ENCODE measurements at regions of chr10 and their contacts with region 1.

Region 1: DNA sequence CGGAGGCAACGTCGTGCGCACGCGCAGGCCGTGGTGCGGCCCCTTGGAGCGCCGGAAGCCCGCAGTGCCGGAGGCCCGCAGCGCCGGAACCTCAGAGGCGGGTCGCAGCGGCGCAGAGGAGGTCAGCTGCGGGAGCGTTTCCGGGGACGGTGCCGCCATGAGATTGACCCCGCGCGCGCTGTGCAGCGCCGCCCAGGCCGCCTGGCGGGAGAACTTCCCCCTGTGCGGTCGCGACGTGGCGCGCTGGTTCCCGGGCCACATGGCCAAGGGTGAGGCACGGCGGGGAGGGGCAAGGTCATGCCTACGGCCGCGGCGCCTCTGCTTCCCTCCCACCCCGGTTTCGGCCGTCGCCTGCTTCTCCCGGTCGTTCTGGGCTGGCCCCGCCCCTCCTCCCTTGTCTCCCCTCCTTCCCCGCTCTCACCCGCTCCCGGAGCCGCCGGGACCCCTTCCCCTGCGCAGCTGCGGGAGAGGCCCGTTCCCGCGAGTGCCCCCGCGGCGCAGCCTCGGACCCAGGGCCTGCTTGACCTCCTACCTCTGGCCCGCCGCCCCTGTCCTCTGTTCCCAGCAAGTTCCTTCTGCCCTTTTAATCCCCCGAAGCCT is at the start of gene MTG1:
- DNase-seq: peak; percentile 96
- H3K4me3 Mint-ChIP-seq: peak within 1 kb of the TSS; percentile 96
- H3K27ac Mint-ChIP-seq: peak within 1 kb of the TSS; percentile 95
- H3K4me1 Mint-ChIP-seq: peaks cover 49% of the 10 kb centered on the region
- H3K27me3 Mint-ChIP-seq: no peaks in the 10 kb centered on the region
- total RNA-seq, gene MTG1: 33.9 to 40.3 TPM

Region 2: DNA sequence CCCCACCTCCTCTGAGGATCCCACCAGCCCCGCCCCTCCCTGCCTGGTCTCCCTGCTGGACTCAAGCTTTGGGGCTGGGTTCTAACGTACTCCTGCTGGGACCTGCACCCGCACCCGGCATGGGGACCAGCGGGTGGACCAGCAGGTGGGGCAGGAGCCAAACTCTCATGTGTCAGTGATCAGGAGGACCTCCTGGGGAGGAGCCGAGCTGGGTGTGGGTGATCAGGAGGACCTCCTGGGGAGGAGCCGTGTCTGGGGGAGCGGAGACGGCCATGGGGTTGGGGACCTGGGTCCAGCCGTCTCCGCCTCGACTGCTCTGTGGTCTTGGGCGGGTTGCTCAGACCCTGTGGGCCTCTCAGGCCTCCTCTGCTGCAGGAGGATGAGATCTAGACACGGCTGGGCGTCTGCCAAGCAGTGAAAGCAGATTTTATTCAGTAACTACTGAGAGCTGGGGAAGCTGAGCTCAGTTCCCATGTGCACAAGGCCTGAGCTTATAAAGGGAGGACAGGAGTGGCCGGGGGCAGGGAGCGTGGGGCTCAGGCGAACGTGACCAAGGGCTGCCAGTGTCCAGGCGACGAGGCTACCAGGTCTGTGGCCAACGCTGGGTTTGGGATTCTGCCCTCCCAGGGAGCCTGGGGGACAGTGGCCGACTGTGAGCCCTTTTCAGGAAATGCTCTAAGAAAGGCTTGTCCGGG is 197.8 kb before region 1 on chr10:
- CTCF ChIA-PET with region 1: no interaction called
- POLR2A ChIA-PET with region 1: no interaction called
- intact Hi-C with region 1: no loop called
- DNase-seq: no peak
- H3K4me3 Mint-ChIP-seq: no peak overlapping the region
- H3K27ac Mint-ChIP-seq: no peak overlapping the region
- H3K4me1 Mint-ChIP-seq: no peaks in the 10 kb centered on the region
- H3K27me3 Mint-ChIP-seq: no peaks in the 10 kb centered on the region

Region 3: GRCh38 chr10:133278577-133279265 is 115.4 kb before region 1 on chr10:
- CTCF ChIA-PET with region 1: interaction called, 3 read pairs
- POLR2A ChIA-PET with region 1: no interaction called
- intact Hi-C with region 1: loop called (anchors 1 kb)
- DNase-seq: peak; percentile 83
- H3K4me3 Mint-ChIP-seq: peak overlapping the region; percentile 63
- H3K27ac Mint-ChIP-seq: peak overlapping the region; percentile 85
- H3K4me1 Mint-ChIP-seq: peaks cover 28% of the 10 kb centered on the region
- H3K27me3 Mint-ChIP-seq: no peaks in the 10 kb centered on the region

Region 4: GRCh38 chr10:133357285-133358151 is 36.6 kb before region 1 on chr10 and contains the start of gene FUOM:
- CTCF ChIA-PET with region 1: no interaction called
- POLR2A ChIA-PET with region 1: interaction called, 5 read pairs
- intact Hi-C with region 1: loop called (anchors 5 kb)
- DNase-seq: peak; percentile 82
- H3K4me3 Mint-ChIP-seq: peak within 1 kb of the TSS; percentile 78
- H3K27ac Mint-ChIP-seq: peak within 1 kb of the TSS; percentile 69
- H3K4me1 Mint-ChIP-seq: peaks cover 3% of the 10 kb centered on the region
- H3K27me3 Mint-ChIP-seq: no peaks in the 10 kb centered on the region
- total RNA-seq, gene FUOM: 46.5 to 49.8 TPM

Region 5: GRCh38 chr10:133373104-133373624 is 21.0 kb before region 1 on chr10 and contains the start of gene ECHS1:
- CTCF ChIA-PET with region 1: interaction called, 3 read pairs
- POLR2A ChIA-PET with region 1: interaction called, 10 read pairs
- intact Hi-C with region 1: loop called (anchors 1 kb)
- DNase-seq: peak; percentile 96
- H3K4me3 Mint-ChIP-seq: peak within 1 kb of the TSS; percentile 81
- H3K27ac Mint-ChIP-seq: peak within 1 kb of the TSS; percentile 33
- H3K4me1 Mint-ChIP-seq: peaks cover 6% of the 10 kb centered on the region
- H3K27me3 Mint-ChIP-seq: no peaks in the 10 kb centered on the region
- total RNA-seq, gene ECHS1: 60.2 to 64.8 TPM

Region 6: DNA sequence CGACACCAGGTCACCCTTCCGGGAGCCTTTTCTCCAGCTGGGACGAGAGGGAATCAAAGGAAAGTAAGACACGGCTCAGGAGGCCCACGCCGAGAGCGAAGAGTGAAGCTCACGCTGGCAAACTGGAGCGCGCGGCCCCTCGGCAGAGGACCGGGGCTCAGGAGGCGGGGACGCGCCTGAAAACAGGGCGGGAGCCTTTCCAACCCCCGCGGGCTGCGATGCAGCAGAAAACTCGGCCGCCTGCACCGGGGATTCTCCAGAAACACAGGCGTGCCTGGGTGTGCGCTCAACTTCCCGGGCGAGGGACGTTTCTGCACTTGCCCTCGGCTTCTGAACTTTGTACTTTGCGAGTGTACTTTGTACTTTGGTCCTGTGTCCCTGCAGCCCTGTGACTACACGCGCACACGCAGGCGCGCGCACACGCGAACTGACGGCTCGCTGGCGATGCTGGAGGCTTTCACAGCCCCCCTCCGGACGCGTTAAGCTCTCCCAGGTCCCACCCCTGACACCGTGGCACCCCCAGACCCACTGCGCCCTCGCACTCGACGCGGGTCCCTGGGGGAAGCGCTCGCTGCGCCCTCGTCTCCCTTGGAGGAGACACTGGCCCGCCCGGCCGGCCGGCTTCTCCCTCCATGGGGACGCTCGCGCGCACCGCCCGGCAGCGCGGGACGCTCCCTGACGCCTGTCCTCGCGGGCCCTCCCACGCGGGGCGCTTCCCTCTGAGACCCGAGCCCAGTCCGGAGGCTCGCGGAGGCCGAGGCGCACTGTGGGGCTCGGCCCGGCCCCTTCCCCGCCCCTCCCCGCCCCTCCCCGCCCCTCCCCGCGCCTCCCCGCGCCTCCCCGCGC is 15.7 kb before region 1 on chr10:
- CTCF ChIA-PET with region 1: interaction called, 3 read pairs
- POLR2A ChIA-PET with region 1: interaction called, 10 read pairs
- intact Hi-C with region 1: loop called (anchors 1 kb)
- DNase-seq: peak; percentile 71
- H3K4me3 Mint-ChIP-seq: peak overlapping the region; percentile 73
- H3K27ac Mint-ChIP-seq: no peak overlapping the region
- H3K4me1 Mint-ChIP-seq: peaks cover 2% of the 10 kb centered on the region
- H3K27me3 Mint-ChIP-seq: no peaks in the 10 kb centered on the region

Region 7: DNA sequence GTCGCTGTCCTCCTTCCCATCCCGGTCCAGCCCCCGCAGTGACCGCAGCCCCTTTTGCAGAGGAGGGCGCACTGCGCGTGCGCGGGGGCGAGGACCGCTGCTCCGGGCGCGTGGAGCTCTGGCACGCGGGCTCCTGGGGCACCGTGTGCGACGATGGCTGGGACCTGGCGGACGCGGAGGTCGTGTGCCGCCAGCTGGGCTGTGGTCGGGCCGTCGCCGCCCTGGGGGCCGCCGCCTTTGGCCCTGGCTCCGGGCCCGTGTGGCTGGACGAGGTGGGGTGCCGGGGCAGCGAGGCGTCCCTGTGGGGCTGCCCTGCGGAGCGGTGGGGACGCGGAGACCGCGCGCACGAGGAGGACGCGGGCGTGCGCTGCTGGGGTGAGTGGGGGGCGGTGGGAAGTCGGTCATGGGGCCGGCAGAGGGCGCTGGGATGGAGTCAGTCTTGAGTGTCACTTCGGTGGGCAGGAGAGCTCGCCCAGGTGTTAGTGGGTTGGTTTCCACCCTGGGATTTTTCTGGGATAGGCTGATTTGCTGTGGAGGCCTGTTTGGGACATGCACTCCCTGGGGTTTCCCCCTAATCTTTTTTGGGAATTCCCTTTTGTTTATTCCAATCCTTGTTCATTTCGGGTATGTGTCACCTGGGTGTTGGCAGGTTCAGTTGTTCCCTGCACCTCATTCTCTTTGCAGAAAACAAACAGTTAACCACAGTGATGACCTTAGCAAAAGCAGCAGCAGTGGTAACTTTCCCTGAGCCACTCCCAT is 71.2 kb after region 1 on chr10:
- CTCF ChIA-PET with region 1: no interaction called
- POLR2A ChIA-PET with region 1: no interaction called
- intact Hi-C with region 1: no loop called
- DNase-seq: no peak
- H3K4me3 Mint-ChIP-seq: no peak overlapping the region
- H3K27ac Mint-ChIP-seq: no peak overlapping the region
- H3K4me1 Mint-ChIP-seq: no peaks in the 10 kb centered on the region
- H3K27me3 Mint-ChIP-seq: no peaks in the 10 kb centered on the region

Region 8: GRCh38 chr10:133528845-133529575 is 134.8 kb after region 1 on chr10:
- CTCF ChIA-PET with region 1: no interaction called
- POLR2A ChIA-PET with region 1: no interaction called
- intact Hi-C with region 1: no loop called
- DNase-seq: no peak
- H3K4me3 Mint-ChIP-seq: peak overlapping the region; percentile 70
- H3K27ac Mint-ChIP-seq: no peak overlapping the region
- H3K4me1 Mint-ChIP-seq: peaks cover 18% of the 10 kb centered on the region
- H3K27me3 Mint-ChIP-seq: peaks cover 47% of the 10 kb centered on the region

Region 9: DNA sequence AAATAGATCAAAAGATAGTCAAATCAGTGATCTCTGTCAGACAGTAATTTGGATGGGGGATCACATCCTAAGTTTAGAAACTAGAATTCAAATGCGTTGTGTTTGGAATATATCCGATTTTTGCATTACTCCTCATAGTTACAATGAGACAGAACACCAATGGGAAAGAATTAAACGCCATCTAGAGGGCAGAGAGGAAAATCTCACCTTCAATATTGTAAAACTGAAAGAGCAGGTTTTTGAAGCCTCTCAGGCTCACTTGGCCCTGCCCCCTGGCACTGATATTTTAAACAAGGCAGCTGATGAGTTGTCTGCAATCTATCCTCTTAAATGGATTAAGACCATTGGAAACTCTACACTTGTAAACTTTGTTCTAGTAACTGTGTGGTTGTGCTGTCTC is 214.7 kb after region 1 on chr10:
- CTCF ChIA-PET with region 1: no interaction called
- POLR2A ChIA-PET with region 1: no interaction called
- intact Hi-C with region 1: no loop called
- DNase-seq: no peak
- H3K4me3 Mint-ChIP-seq: no peak overlapping the region
- H3K27ac Mint-ChIP-seq: no peak overlapping the region
- H3K4me1 Mint-ChIP-seq: no peaks in the 10 kb centered on the region
- H3K27me3 Mint-ChIP-seq: peaks cover 39% of the 10 kb centered on the region